Ovary (tissue), 10 donors: ENCODE measurements at regions of chr3 and their contacts with region 1.

Region 1: DNA sequence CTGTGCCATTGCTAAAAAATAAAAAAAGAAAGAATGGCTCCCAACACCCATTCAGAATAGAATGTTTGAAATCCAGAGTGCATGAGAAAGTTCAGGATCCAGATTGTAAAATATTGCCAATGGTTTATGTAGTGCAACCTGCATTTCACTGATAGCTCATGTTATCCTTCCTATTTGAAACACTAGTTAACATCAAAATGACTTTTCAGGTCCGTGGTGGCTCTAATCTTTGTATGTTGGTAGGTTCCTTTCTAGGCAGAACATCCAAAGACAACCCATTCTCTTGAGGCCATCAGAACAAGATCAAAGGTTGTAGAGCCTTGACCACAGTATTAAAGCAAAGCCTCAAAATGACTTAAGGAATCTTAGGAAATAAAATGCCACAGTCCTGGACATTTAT is 51.0 kb downstream of the PLCL2 start:
- DNase-seq: no peak
- H3K4me3 ChIP-seq: no peak overlapping the region
- H3K27ac ChIP-seq: no peak overlapping the region
- H3K4me1 ChIP-seq: peaks cover 9% of the 10 kb centered on the region
- H3K27me3 ChIP-seq: no peaks in the 10 kb centered on the region
- CTCF ChIP-seq: no peak
- EP300 ChIP-seq: no peak
- POLR2A ChIP-seq: no peak

Region 2: DNA sequence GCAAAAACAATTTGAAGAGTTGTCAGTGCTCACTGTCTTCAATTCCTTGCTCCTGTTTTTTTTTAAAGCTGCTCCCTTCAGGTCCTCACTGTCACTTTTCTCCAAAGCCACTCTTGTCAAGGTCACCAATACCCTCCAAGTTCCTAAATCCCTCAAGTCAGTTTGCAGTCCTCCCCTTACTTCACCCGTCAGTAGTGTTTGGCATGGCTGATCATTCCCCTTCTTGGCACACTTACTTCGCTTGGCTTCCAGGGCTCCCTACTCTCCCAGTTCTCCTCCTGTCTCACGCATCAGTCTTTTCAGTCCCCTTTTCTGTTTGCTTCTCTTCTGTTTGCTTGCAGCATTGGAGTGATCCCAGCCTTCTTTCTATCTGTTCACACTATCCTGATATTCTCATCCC is 25.6 kb before region 1 on chr3:
- intact Hi-C with region 1: loop called in 1 of 4 experiments (anchors 2 kb)
- DNase-seq: no peak
- H3K4me3 ChIP-seq: no peak overlapping the region
- H3K27ac ChIP-seq: no peak overlapping the region
- H3K4me1 ChIP-seq: peaks cover 16% of the 10 kb centered on the region
- H3K27me3 ChIP-seq: no peaks in the 10 kb centered on the region
- CTCF ChIP-seq: no peak
- EP300 ChIP-seq: no peak
- POLR2A ChIP-seq: no peak